Transverse colon (tissue), 4 donors: ENCODE measurements at regions of chrX and their contacts with region 1.

Region 1: GRCh38 chrX:55717521-55718497 is at the start of gene RRAGB:
- DNase-seq: peak; percentile 95
- H3K4me3 ChIP-seq: peak within 1 kb of the TSS; percentile 24 to 69 (median 50)
- H3K27ac ChIP-seq: peak within 1 kb of the TSS; percentile 83 to 95 (median 88)
- H3K4me1 ChIP-seq: peaks cover 0 to 14% (median 0%) of the 10 kb centered on the region in 4 donors
- H3K27me3 ChIP-seq: no peaks in the 10 kb centered on the region
- CTCF ChIP-seq: peak; percentile 46 to 89 (median 63)
- EP300 ChIP-seq: no peak
- POLR2A ChIP-seq: peak; percentile 64
- total RNA-seq, gene RRAGB: 2.2 to 16.7 (median 8.9) TPM

Region 2: DNA sequence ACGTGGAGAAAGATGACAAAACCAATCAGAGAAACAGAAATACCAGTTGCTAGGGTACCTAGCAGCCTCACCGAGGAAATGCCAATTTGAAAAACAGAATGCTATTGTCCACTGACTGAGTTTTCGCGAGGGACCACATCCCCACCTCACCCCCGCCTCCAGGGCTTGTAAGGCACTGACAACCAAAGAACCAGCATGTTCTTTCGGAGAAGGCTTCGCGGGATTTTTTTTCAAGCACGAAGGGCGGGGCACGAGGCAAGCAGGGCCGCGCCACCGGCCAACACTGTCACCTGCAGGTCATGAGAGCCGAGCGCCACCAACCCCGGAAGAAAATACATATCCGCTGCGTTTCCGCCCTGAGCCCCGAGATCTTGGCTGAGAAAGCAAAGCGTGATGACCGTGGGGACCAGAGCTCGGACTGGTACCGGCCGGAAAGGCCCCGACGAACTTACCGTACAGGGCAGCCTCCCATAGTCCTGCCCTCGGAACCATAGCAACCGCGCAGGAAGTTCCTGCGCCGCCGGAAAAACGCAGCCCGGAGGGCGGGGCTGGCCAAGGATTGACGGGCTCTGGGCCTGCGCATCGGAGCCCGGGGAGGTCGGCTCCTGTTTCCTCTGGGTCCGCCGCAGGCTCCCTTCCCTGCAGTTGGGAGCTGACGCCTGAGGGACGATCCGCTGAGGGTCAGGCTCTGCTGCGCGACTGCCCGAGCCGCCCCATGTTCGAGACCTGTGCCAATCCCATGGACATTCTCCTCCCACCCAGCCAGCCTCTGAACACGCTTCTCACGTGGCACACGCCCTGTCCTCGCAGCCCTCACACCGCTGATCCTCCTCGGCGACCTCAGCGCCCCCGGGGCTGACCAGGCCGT is 556.9 kb before region 1 on chrX:
- in situ Hi-C with region 1: loop called in 2 of 4 experiments (anchors 25 kb)
- intact Hi-C with region 1: no loop called
- DNase-seq: peak; percentile 91
- H3K4me3 ChIP-seq: peak overlapping the region; percentile 34 to 69 (median 45)
- H3K27ac ChIP-seq: peak overlapping the region; percentile 84 to 92 (median 90)
- H3K4me1 ChIP-seq: peaks cover 0 to 4% (median 2%) of the 10 kb centered on the region in 4 donors
- H3K27me3 ChIP-seq: no peaks in the 10 kb centered on the region
- CTCF ChIP-seq: peak; percentile 22 to 62 (median 45)
- EP300 ChIP-seq: no peak
- POLR2A ChIP-seq: peak; percentile 78

Region 3: GRCh38 chrX:55488593-55489313 is 229.1 kb before region 1 on chrX:
- in situ Hi-C with region 1: loop called in 1 of 4 experiments (anchors 25 kb)
- intact Hi-C with region 1: loop called (anchors 10 kb)
- DNase-seq: peak; percentile 60
- H3K4me3 ChIP-seq: peak overlapping the region; percentile 48 to 62 (median 57)
- H3K27ac ChIP-seq: peak overlapping the region; percentile 83 to 89 (median 88)
- H3K4me1 ChIP-seq: peaks cover 0 to 4% (median 0%) of the 10 kb centered on the region in 4 donors
- H3K27me3 ChIP-seq: no peaks in the 10 kb centered on the region
- CTCF ChIP-seq: no peak
- EP300 ChIP-seq: no peak
- POLR2A ChIP-seq: no peak

Region 4: GRCh38 chrX:55663584-55663983 is 54.2 kb before region 1 on chrX:
- in situ Hi-C with region 1: no loop called
- intact Hi-C with region 1: no loop called
- DNase-seq: no peak
- H3K4me3 ChIP-seq: no peak overlapping the region
- H3K27ac ChIP-seq: no peak overlapping the region
- H3K4me1 ChIP-seq: no peaks in the 10 kb centered on the region
- H3K27me3 ChIP-seq: no peaks in the 10 kb centered on the region
- CTCF ChIP-seq: no peak
- EP300 ChIP-seq: no peak
- POLR2A ChIP-seq: no peak